ENCODE measurements at regions of chr19 and their contacts with region 1.

Region 1: DNA sequence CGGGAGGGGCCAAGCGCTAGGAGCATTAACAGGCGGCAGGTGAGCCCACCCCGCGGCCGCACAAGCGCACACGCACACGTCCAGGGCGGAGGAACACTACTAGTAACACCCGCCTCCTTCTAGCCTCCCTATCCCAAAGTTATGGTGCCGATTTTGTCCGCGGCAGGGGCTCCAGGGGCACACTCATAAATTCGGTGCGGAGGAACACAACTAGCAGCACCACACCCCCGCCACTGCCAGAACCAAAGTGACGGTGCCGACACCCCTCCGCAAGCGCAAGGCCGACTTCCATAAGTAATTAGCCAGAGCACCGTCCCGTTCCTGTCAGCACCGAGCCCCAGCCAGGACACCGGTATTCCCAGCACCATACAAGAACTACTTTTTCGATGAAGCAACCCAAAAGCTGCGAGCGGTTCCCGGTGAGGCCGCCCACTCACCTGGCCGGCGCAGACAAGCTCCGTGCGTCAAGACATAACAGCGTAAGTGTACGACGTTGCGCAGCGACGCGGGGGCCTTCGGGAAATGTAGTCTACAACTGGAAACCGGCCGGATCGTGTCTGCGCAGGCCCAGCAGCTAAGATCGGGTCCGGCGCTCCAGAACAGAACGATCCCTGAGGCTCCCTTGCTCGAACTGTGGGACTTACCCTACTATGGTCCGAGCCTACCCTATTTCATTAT is at the starts of genes ZNF540 and ZNF571:
- DNase-seq: peak; percentile 96
- H3K4me3 ChIP-seq: peak within 1 kb of the TSS; percentile 78
- H3K27ac ChIP-seq: peak within 1 kb of the TSS; percentile 73
- H3K4me1 ChIP-seq: peaks cover 10% of the 10 kb centered on the region
- H3K27me3 ChIP-seq: no peaks in the 10 kb centered on the region
- CTCF ChIP-seq: no peak
- total RNA-seq, gene ZNF540: 0.49 to 1.2 TPM
- total RNA-seq, gene ZNF571: 3.2 to 3.8 TPM

Region 2: GRCh38 chr19:37655689-37656371 is 61.4 kb after region 1 on chr19:
- intact Hi-C with region 1: loop called (anchors 10 kb)
- DNase-seq: peak; percentile 90
- H3K4me3 ChIP-seq: peak overlapping the region; percentile 61
- H3K27ac ChIP-seq: peak overlapping the region; percentile 85
- H3K4me1 ChIP-seq: peaks cover 7% of the 10 kb centered on the region
- H3K27me3 ChIP-seq: no peaks in the 10 kb centered on the region
- CTCF ChIP-seq: no peak

Region 3: GRCh38 chr19:37725181-37725580 is 130.7 kb after region 1 on chr19:
- intact Hi-C with region 1: no loop called
- DNase-seq: no peak
- H3K4me3 ChIP-seq: no peak overlapping the region
- H3K27ac ChIP-seq: no peak overlapping the region
- H3K4me1 ChIP-seq: no peaks in the 10 kb centered on the region
- H3K27me3 ChIP-seq: no peaks in the 10 kb centered on the region
- CTCF ChIP-seq: no peak